B cell (primary cell): ENCODE measurements at regions of chr4 and their contacts with region 1.

Region 1: DNA sequence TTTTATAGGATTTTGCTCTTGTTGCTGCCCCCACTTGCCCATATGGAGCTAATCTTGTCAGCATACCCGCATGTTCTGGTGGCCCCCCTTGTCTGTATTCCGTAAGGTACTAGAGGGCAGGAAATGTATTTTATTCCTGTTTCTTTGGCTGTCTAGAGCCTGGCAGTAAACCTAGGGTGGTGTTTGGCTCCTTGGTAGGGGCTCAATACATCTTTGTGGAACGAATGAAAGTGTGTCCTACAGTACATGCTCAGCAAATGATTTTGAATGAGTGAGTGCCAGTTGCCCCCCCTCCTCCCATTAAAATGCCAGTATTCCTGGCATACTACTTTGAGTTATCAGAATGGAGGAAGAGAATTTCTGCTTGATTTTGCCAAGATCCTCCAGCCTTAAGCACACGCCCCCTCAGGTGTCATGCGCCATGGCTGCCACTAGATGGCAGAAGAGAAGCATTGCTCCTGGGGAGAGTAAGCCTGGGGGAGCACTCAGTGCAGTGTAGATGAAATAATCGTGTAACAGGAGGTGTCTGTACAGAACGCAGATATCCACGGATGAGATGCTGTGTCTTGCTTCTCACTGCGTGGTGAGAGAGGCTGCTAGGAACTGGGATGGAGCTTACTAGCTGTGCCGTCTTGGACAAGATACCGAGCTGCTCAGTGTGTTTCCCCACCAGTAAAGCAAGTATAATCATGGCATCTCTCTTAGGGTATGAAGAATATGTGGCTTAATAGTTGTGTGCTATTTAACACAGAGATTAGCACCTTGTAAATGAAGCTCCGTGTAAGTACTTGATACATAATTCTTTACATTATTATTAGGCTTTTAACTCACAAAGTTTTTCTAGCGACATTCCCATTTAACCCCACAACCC is 17.2 kb upstream of the RNF212 start:
- DNase-seq: peak; percentile 89
- ATAC-seq: peak; percentile 99
- H3K4me3 ChIP-seq: no peak overlapping the region
- H3K4me3 Mint-ChIP-seq: no peak overlapping the region
- H3K27ac ChIP-seq: no peak overlapping the region
- H3K27ac Mint-ChIP-seq: no peak overlapping the region
- H3K4me1 ChIP-seq: peaks cover 18% of the 10 kb centered on the region in 2 donors
- H3K4me1 Mint-ChIP-seq: peaks cover 22% of the 10 kb centered on the region
- H3K27me3 ChIP-seq: no peaks in the 10 kb centered on the region
- H3K27me3 Mint-ChIP-seq: peaks cover 12% of the 10 kb centered on the region
- CTCF ChIP-seq: peak; percentile 100

Region 2: DNA sequence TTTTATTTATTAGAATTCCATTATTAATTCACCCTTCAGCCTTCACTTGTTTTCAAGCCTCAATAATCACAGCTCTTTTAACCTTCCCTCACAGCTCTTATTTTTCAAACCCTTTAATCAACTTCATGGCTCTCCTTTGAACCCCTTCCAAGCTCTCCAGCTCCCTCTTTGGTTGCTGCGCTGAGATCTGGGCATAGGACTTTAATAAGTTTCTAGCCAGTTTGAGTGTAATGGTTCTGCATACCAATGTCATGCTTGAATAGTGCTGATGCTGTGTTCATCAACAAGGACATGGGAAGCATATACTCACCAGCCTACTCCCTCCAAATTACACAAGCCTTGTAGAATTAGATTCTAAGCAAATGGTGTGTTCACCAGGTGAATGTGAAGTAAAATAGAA is 13.7 kb before region 1 on chr4:
- CTCF ChIA-PET with region 1: interaction called, 10 read pairs
- POLR2A ChIA-PET with region 1: no interaction called
- intact Hi-C with region 1: no loop called
- DNase-seq: no peak
- ATAC-seq: no peak
- H3K4me3 ChIP-seq: no peak overlapping the region
- H3K4me3 Mint-ChIP-seq: no peak overlapping the region
- H3K27ac ChIP-seq: no peak overlapping the region
- H3K27ac Mint-ChIP-seq: no peak overlapping the region
- H3K4me1 ChIP-seq: no peaks in the 10 kb centered on the region
- H3K4me1 Mint-ChIP-seq: no peaks in the 10 kb centered on the region
- H3K27me3 ChIP-seq: peaks cover 0 to 10% (median 2%) of the 10 kb centered on the region in 4 experiments
- H3K27me3 Mint-ChIP-seq: peaks cover 21% of the 10 kb centered on the region
- CTCF ChIP-seq: no peak

Region 3: GRCh38 chr4:1249148-1249730 is 118.7 kb after region 1 on chr4:
- CTCF ChIA-PET with region 1: interaction called, 10 read pairs
- POLR2A ChIA-PET with region 1: no interaction called
- intact Hi-C with region 1: loop called (anchors 2 kb)
- DNase-seq: peak; percentile 95
- ATAC-seq: peak; percentile 73
- H3K4me3 ChIP-seq: peak overlapping the region; percentile 23 to 81 (median 62)
- H3K4me3 Mint-ChIP-seq: peak overlapping the region; percentile 92
- H3K27ac ChIP-seq: peak overlapping the region; percentile 84 to 85
- H3K27ac Mint-ChIP-seq: peak overlapping the region; percentile 97
- H3K4me1 ChIP-seq: peaks cover 47 to 57% of the 10 kb centered on the region in 2 donors
- H3K4me1 Mint-ChIP-seq: peaks cover 60% of the 10 kb centered on the region
- H3K27me3 ChIP-seq: no peaks in the 10 kb centered on the region
- H3K27me3 Mint-ChIP-seq: no peaks in the 10 kb centered on the region
- CTCF ChIP-seq: no peak

Region 4: DNA sequence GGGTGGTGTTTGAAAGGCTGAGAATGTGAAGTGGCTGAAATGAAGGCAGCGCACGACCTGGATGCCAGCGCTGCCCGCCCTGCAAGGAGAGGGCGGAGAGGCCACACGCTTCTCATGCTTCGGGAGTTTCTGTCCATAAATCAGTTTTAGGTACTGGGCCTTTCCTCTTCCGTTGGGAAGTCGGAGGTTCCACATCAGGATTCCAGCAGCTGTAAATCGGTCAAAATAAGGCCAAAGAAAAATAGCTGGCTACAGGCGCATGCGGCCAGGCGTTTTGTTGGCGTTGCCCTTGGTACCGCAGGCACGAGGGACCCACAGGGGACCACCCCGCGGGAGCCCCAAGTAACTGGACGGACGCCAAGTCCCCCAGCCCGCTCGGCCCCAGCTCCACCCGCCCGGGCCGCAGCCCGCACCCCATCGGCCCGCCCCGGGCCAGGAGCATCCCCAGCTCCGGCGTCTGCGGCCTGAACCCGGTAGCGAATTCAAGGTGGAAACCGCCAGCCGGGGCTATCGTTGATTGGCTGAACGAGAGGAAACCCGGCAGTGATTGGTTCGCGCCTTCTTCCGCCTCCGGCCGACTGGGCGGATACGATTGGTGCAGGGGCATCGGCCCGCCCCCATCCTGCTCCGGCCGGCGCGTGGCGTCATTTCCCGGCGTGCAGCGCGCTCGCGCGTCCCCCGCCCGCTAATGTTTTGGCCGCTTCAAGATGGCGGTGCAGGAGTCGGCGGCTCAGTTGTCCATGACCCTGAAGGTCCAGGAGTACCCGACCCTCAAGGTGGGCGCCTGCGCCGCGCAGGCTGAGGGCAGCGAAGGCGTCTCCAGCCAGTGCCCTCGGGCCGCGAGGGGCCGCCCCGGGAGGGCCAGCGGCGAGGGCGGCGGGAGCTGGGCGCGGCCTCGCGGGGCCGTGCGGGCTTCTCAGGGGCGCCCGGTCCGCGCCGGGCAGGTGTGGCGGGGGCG is 158.9 kb after region 1 on chr4 and contains the start of gene MAEA:
- CTCF ChIA-PET with region 1: interaction called, 10 read pairs
- POLR2A ChIA-PET with region 1: no interaction called
- intact Hi-C with region 1: no loop called
- DNase-seq: peak; percentile 97
- ATAC-seq: peak; percentile 97
- H3K4me3 ChIP-seq: peak within 1 kb of the TSS; percentile 66 to 83 (median 79)
- H3K4me3 Mint-ChIP-seq: peak within 1 kb of the TSS; percentile 94
- H3K27ac ChIP-seq: peak within 1 kb of the TSS; percentile 65 to 88
- H3K27ac Mint-ChIP-seq: peak within 1 kb of the TSS; percentile 86
- H3K4me1 ChIP-seq: peaks cover 34 to 43% of the 10 kb centered on the region in 2 donors
- H3K4me1 Mint-ChIP-seq: peaks cover 38% of the 10 kb centered on the region
- H3K27me3 ChIP-seq: no peaks in the 10 kb centered on the region
- H3K27me3 Mint-ChIP-seq: no peaks in the 10 kb centered on the region
- CTCF ChIP-seq: no peak
- total RNA-seq, gene MAEA: 103 and 106 TPM in 2 replicates

Region 5: DNA sequence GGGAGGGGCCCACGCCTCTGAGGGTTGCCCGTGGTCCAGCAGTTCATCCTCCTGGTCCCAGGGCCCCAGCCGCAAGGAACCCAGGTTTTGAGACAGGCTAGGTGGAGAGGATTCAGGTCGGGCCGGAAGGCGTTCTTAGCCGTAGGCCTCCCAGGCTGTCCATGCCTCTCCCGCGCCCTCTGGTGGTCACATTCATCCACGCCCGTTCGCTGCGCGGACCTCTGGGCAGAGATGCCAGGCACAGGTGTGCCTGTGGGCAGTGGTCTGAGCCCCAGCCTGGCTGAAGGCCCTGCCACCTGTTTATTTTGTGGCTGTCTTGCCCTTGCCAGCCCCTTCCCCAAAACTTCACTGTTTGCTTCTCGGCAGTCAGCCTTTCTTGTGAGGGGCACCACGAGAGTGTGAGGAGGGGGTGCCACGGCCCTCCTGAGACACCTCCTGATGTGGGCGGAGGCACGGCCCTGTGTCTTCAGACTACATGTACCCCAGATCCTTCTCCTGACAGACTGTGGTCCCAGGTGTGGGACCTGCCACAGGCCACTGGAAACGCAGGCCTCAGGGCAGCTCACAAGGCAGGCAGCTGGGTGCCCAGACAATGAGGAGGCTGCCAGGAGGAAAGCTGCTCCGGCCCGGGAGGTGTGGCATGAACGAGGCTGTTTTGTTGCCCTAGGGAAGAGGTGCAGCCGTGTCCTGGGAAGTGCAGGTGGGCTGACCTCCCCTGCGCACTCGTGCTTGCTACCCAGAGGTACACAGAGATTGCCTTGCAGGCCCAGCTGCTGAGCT is 221.5 kb after region 1 on chr4:
- CTCF ChIA-PET with region 1: interaction called, 102 read pairs
- POLR2A ChIA-PET with region 1: interaction called, 4 read pairs
- intact Hi-C with region 1: loop called (anchors 1 kb)
- DNase-seq: peak; percentile 90
- ATAC-seq: peak; percentile 26
- H3K4me3 ChIP-seq: no peak overlapping the region
- H3K4me3 Mint-ChIP-seq: no peak overlapping the region
- H3K27ac ChIP-seq: no peak overlapping the region
- H3K27ac Mint-ChIP-seq: peak overlapping the region; percentile 67
- H3K4me1 ChIP-seq: peaks cover 10 to 20% of the 10 kb centered on the region in 2 donors
- H3K4me1 Mint-ChIP-seq: peaks cover 25% of the 10 kb centered on the region
- H3K27me3 ChIP-seq: no peaks in the 10 kb centered on the region
- H3K27me3 Mint-ChIP-seq: no peaks in the 10 kb centered on the region
- CTCF ChIP-seq: peak; percentile 90

Region 6: GRCh38 chr4:1512738-1513660 is 382.4 kb after region 1 on chr4:
- CTCF ChIA-PET with region 1: interaction called, 4 read pairs
- POLR2A ChIA-PET with region 1: no interaction called
- intact Hi-C with region 1: loop called (anchors 5 kb)
- DNase-seq: peak; percentile 46
- ATAC-seq: peak; percentile 24
- H3K4me3 ChIP-seq: no peak overlapping the region
- H3K4me3 Mint-ChIP-seq: no peak overlapping the region
- H3K27ac ChIP-seq: no peak overlapping the region
- H3K27ac Mint-ChIP-seq: no peak overlapping the region
- H3K4me1 ChIP-seq: peaks cover 0 to 5% of the 10 kb centered on the region in 2 donors
- H3K4me1 Mint-ChIP-seq: no peaks in the 10 kb centered on the region
- H3K27me3 ChIP-seq: peaks cover 0 to 23% (median 3%) of the 10 kb centered on the region in 4 experiments
- H3K27me3 Mint-ChIP-seq: peaks cover 12% of the 10 kb centered on the region
- CTCF ChIP-seq: peak; percentile 52